T-cell (primary cell): ENCODE measurements at regions of chr1 and their contacts with region 1.

Region 1: DNA sequence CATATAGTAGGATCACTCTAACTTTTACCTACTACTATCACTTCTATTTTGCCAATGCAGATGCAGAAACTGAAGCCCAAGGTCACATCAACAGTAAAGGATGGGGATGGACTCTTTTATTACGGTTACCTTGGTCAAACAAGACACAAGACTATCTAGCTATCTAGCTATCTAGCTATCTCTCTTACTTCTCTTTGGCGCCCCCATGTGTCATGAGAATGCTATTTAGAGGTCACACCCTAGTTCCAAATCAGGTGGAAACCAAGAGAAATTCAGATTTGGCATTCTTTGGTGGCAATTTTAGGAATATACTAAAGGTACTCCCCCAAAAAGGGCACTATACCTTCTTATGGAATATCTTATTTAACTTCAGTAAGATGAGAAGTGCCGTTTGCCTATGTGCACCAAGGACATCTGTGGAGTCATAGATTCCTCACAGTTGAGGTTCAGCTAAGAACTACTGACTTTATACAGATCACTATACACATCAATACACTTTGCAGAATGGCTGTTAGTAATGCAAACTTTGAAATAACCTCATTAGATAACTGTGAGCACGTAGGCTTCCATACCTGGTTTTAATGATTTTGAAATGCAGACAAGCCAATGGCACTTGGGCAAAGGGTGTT is 6.7 kb downstream of the ZNF648 start:
- DNase-seq: peak in 29 of 35 experiments; percentile 17 to 73 (median 53)
- ATAC-seq: peak; percentile 40 to 66 (median 60)
- H3K4me3 ChIP-seq: no peak overlapping the region
- H3K4me3 Mint-ChIP-seq: no peak overlapping the region
- H3K27ac ChIP-seq: no peak overlapping the region
- H3K27ac Mint-ChIP-seq: no peak overlapping the region
- H3K4me1 ChIP-seq: peaks cover 0 to 3% of the 10 kb centered on the region in 2 experiments
- H3K4me1 Mint-ChIP-seq: peaks cover 4 to 7% (median 6%) of the 10 kb centered on the region in 3 donors
- H3K27me3 ChIP-seq: peaks cover 8 to 24% of the 10 kb centered on the region in 2 experiments
- H3K27me3 Mint-ChIP-seq: peaks cover 21 to 36% of the 10 kb centered on the region in 2 donors

Region 2: GRCh38 chr1:181479137-181479745 is 575.6 kb before region 1 on chr1:
- CTCF ChIA-PET with region 1: interaction called, 9 to 17 read pairs
- POLR2A ChIA-PET with region 1: interaction called in 1 of 2 experiments, 3 read pairs
- DNase-seq: peak in 9 of 35 experiments; percentile 5 to 60 (median 9)
- ATAC-seq: peak in 2 of 4 experiments; percentile 56 to 57
- H3K4me3 ChIP-seq: no peak overlapping the region
- H3K4me3 Mint-ChIP-seq: no peak overlapping the region
- H3K27ac ChIP-seq: no peak overlapping the region
- H3K27ac Mint-ChIP-seq: no peak overlapping the region
- H3K4me1 ChIP-seq: no peaks in the 10 kb centered on the region
- H3K4me1 Mint-ChIP-seq: peaks cover 8 to 13% (median 11%) of the 10 kb centered on the region in 3 donors
- H3K27me3 ChIP-seq: peaks cover 10 to 35% of the 10 kb centered on the region in 2 experiments
- H3K27me3 Mint-ChIP-seq: peaks cover 36 to 40% of the 10 kb centered on the region in 2 donors

Region 3: GRCh38 chr1:182185813-182186756 is 131.3 kb after region 1 on chr1:
- CTCF ChIA-PET with region 1: no interaction called
- POLR2A ChIA-PET with region 1: no interaction called
- DNase-seq: no peak
- ATAC-seq: no peak
- H3K4me3 ChIP-seq: no peak overlapping the region
- H3K4me3 Mint-ChIP-seq: no peak overlapping the region
- H3K27ac ChIP-seq: no peak overlapping the region
- H3K27ac Mint-ChIP-seq: no peak overlapping the region
- H3K4me1 ChIP-seq: no peaks in the 10 kb centered on the region
- H3K4me1 Mint-ChIP-seq: no peaks in the 10 kb centered on the region
- H3K27me3 ChIP-seq: no peaks in the 10 kb centered on the region
- H3K27me3 Mint-ChIP-seq: peaks cover 4 to 9% of the 10 kb centered on the region in 2 donors